ENCODE measurements at regions of chr9 and their contacts with region 1.

Region 1: DNA sequence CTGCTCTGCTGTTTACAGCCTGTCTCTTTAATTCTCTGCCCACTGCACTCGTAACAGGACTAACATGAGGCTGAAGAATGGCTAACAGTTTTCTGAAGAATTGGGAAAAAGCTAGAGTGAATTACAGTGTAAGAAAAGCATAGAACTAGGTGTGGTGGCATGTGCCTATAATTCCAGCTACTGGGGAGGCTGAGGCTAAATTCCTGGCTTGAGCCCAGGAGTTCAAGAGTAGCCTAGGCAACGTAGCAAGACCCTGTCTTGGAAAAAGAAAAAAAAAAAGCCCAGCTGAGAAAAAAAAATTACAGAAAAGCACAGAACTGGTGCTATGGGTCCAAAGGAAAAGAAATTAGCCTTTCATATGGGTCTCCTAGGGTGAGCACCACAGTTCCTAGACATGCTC is 13.9 kb upstream of the UHRF2 start:
- DNase-seq: no peak
- H3K4me3 ChIP-seq: no peak overlapping the region
- H3K27ac ChIP-seq: no peak overlapping the region
- H3K4me1 ChIP-seq: no peaks in the 10 kb centered on the region
- H3K27me3 ChIP-seq: no peaks in the 10 kb centered on the region
- CTCF ChIP-seq: no peak
- EP300 ChIP-seq: no peak
- POLR2A ChIP-seq: no peak

Region 2: GRCh38 chr9:6667633-6668280 is 268.7 kb after region 1 on chr9:
- intact Hi-C with region 1: loop called in 1 of 4 experiments (anchors 10 kb)
- DNase-seq: no peak
- H3K4me3 ChIP-seq: no peak overlapping the region
- H3K27ac ChIP-seq: no peak overlapping the region
- H3K4me1 ChIP-seq: no peaks in the 10 kb centered on the region
- H3K27me3 ChIP-seq: no peaks in the 10 kb centered on the region
- CTCF ChIP-seq: no peak
- EP300 ChIP-seq: no peak
- POLR2A ChIP-seq: no peak

Measured in ovary (tissue), 10 donors.